Panc1 (cell line): ENCODE measurements at regions of chr12 and their contacts with region 1.

Region 1: GRCh38 chr12:79886917-79887519 is 47.9 kb downstream of the PPP1R12A start:
- DNase-seq: peak; percentile 45
- ATAC-seq: peak; percentile 91
- H3K4me3 ChIP-seq: no peak overlapping the region
- H3K27ac ChIP-seq: no peak overlapping the region
- H3K4me1 ChIP-seq: no peaks in the 10 kb centered on the region; the same call in 1 of the 2 replicates
- H3K27me3 ChIP-seq: no peaks in the 10 kb centered on the region
- CTCF ChIP-seq: peak; percentile 70; the same call in 1 of the 2 replicates

Region 2: GRCh38 chr12:79873201-79873600 is 13.8 kb before region 1 on chr12:
- CTCF ChIA-PET with region 1: no interaction called
- POLR2A ChIA-PET with region 1: no interaction called
- in situ Hi-C with region 1: no loop called
- intact Hi-C with region 1: no loop called
- DNase-seq: no peak
- ATAC-seq: no peak
- H3K4me3 ChIP-seq: no peak overlapping the region
- H3K27ac ChIP-seq: no peak overlapping the region
- H3K4me1 ChIP-seq: no peaks in the 10 kb centered on the region
- H3K27me3 ChIP-seq: no peaks in the 10 kb centered on the region
- CTCF ChIP-seq: no peak

Region 3: DNA sequence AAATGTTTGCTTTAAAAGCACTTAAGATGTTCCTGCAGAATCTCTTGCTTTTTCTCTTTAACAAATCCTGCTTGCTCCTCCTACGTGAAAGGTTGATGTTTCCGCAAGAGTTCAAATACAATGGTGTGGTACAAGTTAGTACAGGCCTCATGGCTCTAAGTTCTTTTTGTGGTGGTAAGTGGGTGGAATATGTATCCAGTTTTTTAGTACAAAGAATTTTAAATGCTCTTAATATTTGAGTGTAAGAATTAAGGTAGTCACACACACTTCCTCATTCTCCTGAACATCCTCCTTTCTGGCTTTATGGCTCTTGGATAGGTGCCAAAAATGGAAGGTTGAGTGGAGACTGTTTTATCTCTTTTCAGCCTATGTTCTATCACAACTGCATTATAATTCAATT is 214.1 kb after region 1 on chr12:
- CTCF ChIA-PET with region 1: no interaction called
- POLR2A ChIA-PET with region 1: no interaction called
- in situ Hi-C with region 1: no loop called
- intact Hi-C with region 1: no loop called
- DNase-seq: no peak
- ATAC-seq: no peak
- H3K4me3 ChIP-seq: no peak overlapping the region
- H3K27ac ChIP-seq: no peak overlapping the region
- H3K4me1 ChIP-seq: no peaks in the 10 kb centered on the region
- H3K27me3 ChIP-seq: no peaks in the 10 kb centered on the region; the same call in 1 of the 2 replicates
- CTCF ChIP-seq: no peak

Region 4: GRCh38 chr12:80186727-80187217 is 299.8 kb after region 1 on chr12:
- CTCF ChIA-PET with region 1: no interaction called
- POLR2A ChIA-PET with region 1: no interaction called
- in situ Hi-C with region 1: no loop called
- intact Hi-C with region 1: loop called (anchors 10 kb)
- DNase-seq: peak; percentile 59
- ATAC-seq: peak; percentile 89
- H3K4me3 ChIP-seq: no peak overlapping the region
- H3K27ac ChIP-seq: no peak overlapping the region
- H3K4me1 ChIP-seq: no peaks in the 10 kb centered on the region
- H3K27me3 ChIP-seq: no peaks in the 10 kb centered on the region
- CTCF ChIP-seq: peak; percentile 74